Activated CD8-positive, alpha-beta T cell treated with anti-CD3 and anti-CD28 coated beads, Interleukin-2, amount 10 ng/mL, durations not matched to agents 7 days and 5 days (primary cell): ENCODE measurements at regions of chr16 and their contacts with region 1.

Region 1: GRCh38 chr16:10509534-10510025 is 70.8 kb downstream of the EMP2 start:
- DNase-seq: peak; percentile 78
- ATAC-seq: peak; percentile 92
- H3K4me3 Mint-ChIP-seq: no peak overlapping the region
- H3K27ac Mint-ChIP-seq: no peak overlapping the region
- H3K4me1 Mint-ChIP-seq: no peaks in the 10 kb centered on the region
- H3K27me3 Mint-ChIP-seq: peaks cover 8% of the 10 kb centered on the region

Region 2: DNA sequence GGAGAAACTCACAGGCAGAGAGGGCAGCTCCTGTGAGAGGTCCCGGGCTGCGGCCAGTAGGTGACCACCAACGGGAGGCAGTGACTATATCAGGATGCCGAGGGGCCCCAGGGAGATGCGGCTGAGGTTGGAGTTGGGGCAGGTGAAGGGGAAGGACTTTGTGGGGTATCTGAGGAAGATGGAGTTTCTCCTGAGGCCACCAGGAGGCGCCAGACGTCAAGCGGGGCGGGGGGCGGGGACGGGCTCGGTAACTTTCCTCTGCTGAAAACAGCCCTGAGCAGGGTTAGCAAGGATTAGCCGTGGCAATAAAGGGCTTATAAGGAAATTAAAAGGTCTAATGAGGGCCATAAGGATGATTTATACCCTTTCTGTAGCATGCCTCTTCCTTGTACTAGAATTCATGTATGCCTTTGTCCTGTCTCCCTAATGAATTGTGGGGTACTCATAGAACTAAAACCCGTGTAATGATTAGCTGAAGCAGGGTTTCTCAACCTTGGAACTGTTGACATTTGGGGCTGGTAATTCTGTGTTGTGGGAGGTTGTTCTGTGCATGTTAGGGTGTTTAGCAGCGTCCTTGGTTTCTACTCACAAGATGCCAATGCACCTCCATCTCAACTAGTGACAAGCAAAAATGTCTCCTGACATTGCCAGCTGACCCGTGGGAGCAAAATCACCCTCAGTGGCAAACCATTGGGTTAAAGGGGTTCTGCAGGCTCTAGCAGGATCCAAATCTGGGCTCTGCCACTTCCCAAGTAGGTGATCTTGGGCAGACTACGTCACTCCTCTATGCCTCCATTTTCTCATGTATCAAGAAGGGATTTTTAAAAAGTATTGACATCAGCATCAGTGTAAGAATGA is 252.6 kb before region 1 on chr16:
- CTCF ChIA-PET with region 1: interaction called, 47 read pairs
- POLR2A ChIA-PET with region 1: no interaction called
- DNase-seq: peak; percentile 59
- ATAC-seq: peak; percentile 63
- H3K4me3 Mint-ChIP-seq: no peak overlapping the region
- H3K27ac Mint-ChIP-seq: no peak overlapping the region
- H3K4me1 Mint-ChIP-seq: peaks cover 8% of the 10 kb centered on the region
- H3K27me3 Mint-ChIP-seq: peaks cover 7% of the 10 kb centered on the region